CD4-positive, alpha-beta memory T cell (primary cell): ENCODE measurements at regions of chr12 and their contacts with region 1.

Region 1: DNA sequence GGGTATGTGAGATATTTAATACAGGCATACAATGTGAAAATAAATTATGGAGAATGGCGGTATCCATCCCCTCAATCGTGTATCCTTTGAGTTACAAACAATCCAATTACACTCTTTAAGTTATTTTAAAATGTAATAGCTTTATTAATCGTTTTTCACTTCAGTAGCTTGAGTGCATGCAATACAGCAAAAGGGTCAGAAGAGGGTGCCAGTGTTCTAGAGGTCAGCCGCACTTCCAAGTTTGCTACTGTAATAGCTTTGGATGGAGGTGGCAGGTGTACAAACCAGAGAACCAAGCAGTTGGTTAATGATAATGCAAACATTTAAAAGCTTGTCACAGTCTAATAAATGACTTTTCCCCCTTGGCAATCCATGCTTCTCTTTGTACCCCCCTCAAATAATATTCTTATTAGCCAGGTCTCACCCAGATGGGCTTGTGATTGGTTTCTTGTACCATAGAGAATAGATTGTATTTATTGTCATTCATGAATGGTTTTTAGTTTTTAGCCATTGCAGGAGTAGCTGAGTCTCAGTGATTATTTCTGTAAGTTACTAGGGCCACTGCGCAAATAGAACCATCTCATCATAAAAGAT is 127.0 kb downstream of the ERC1 start:
- DNase-seq: peak; percentile 66 to 72 (median 68)
- H3K4me3 ChIP-seq: no peak overlapping the region
- H3K4me3 Mint-ChIP-seq: no peak overlapping the region
- H3K27ac ChIP-seq: no peak overlapping the region
- H3K27ac Mint-ChIP-seq: no peak overlapping the region
- H3K4me1 ChIP-seq: peaks cover 8% of the 10 kb centered on the region
- H3K4me1 Mint-ChIP-seq: peaks cover 5 to 18% (median 10%) of the 10 kb centered on the region in 4 donors
- H3K27me3 ChIP-seq: no peaks in the 10 kb centered on the region
- H3K27me3 Mint-ChIP-seq: no peaks in the 10 kb centered on the region

Region 2: DNA sequence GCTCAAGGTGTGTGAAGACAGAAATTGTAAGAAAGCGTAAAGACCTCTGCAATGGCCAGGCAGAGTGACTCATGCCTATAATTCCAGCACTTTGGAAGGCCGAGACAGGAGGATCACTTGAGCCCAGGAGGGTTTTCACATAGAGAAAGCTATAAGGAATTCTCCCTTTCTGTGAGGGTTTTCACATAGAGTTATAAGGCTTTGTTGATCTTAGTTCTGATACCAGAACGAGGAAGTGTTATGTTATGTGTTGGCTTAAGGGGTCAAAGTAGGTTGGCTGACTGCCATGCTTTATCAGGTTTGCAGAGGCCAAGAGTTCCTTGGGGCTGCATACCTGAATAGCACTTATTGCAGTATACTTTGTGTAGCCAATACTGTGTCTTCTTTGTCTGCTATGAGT is 12.1 kb after region 1 on chr12:
- CTCF ChIA-PET with region 1: interaction called, 51 read pairs
- POLR2A ChIA-PET with region 1: interaction called, 3 read pairs
- intact Hi-C with region 1: no loop called
- DNase-seq: no peak
- H3K4me3 ChIP-seq: no peak overlapping the region
- H3K4me3 Mint-ChIP-seq: peak overlapping the region in 1 of 8 donors; percentile 7
- H3K27ac ChIP-seq: no peak overlapping the region
- H3K27ac Mint-ChIP-seq: peak overlapping the region in 2 of 7 donors; percentile 1 to 22
- H3K4me1 ChIP-seq: peaks cover 24% of the 10 kb centered on the region
- H3K4me1 Mint-ChIP-seq: peaks cover 26 to 50% (median 36%) of the 10 kb centered on the region in 4 donors
- H3K27me3 ChIP-seq: no peaks in the 10 kb centered on the region
- H3K27me3 Mint-ChIP-seq: no peaks in the 10 kb centered on the region

Region 3: GRCh38 chr12:1179128-1179527 is 61.1 kb after region 1 on chr12:
- CTCF ChIA-PET with region 1: interaction called, 14 read pairs
- POLR2A ChIA-PET with region 1: no interaction called
- intact Hi-C with region 1: no loop called
- DNase-seq: no peak
- H3K4me3 ChIP-seq: no peak overlapping the region
- H3K4me3 Mint-ChIP-seq: no peak overlapping the region
- H3K27ac ChIP-seq: no peak overlapping the region
- H3K27ac Mint-ChIP-seq: no peak overlapping the region
- H3K4me1 ChIP-seq: no peaks in the 10 kb centered on the region
- H3K4me1 Mint-ChIP-seq: peaks cover 2 to 4% (median 3%) of the 10 kb centered on the region in 4 donors
- H3K27me3 ChIP-seq: no peaks in the 10 kb centered on the region
- H3K27me3 Mint-ChIP-seq: no peaks in the 10 kb centered on the region

Region 4: GRCh38 chr12:1488908-1489381 is 370.9 kb after region 1 on chr12:
- CTCF ChIA-PET with region 1: interaction called, 10 read pairs
- POLR2A ChIA-PET with region 1: no interaction called
- intact Hi-C with region 1: no loop called
- DNase-seq: peak in 4 of 5 donors; percentile 24 to 34 (median 30)
- H3K4me3 ChIP-seq: no peak overlapping the region
- H3K4me3 Mint-ChIP-seq: peak overlapping the region; percentile 15 to 81 (median 52)
- H3K27ac ChIP-seq: no peak overlapping the region
- H3K27ac Mint-ChIP-seq: peak overlapping the region in 6 of 7 donors; percentile 71 to 93 (median 87)
- H3K4me1 ChIP-seq: peaks cover 14% of the 10 kb centered on the region
- H3K4me1 Mint-ChIP-seq: peaks cover 13 to 15% (median 15%) of the 10 kb centered on the region in 4 donors
- H3K27me3 ChIP-seq: no peaks in the 10 kb centered on the region
- H3K27me3 Mint-ChIP-seq: no peaks in the 10 kb centered on the region

Region 5: DNA sequence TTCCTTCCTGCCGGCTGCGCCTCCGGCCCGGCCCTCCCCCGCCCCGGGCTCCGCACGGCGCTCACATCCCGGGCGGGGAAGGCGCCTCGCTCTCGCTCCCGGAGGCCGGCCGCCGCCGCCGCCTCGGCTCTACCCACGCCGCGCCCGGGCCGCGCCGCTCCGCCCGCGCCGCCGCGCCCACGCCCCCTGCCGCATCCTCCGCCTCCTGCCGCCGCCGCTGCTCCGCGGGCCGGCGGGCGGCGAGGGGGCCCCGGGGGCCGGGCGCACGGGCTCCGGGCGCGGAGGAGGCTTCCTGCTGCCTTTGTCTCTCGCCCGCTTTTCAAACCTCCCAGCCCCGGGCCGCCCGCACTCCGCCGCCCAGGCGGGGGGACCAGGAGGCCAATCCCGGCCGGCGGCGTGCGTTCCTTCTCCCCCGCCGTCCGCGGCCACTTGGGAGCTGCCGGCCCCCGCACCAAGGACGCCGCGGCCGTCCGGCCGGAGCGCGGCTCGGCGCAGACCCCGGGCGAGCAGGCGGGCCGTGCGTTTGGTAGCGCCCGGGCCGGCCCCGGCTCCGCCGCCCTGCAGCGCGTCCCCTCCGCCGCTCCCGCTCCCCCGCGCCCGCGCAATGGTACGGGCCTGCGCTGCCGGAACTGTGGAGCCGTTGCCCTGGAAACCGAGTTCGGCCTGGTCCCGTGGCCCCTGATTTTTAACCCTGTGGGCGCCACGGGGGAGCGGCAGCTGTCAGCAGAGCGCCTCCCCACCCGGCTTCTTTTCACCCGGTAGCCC is 476.4 kb after region 1 on chr12 and contains the start of gene FBXL14:
- CTCF ChIA-PET with region 1: interaction called, 124 read pairs
- POLR2A ChIA-PET with region 1: interaction called, 15 read pairs
- intact Hi-C with region 1: no loop called
- DNase-seq: peak; percentile 91 to 93 (median 92)
- H3K4me3 ChIP-seq: peak within 1 kb of the TSS; percentile 77 to 95
- H3K4me3 Mint-ChIP-seq: peak within 1 kb of the TSS; percentile 92 to 96 (median 94)
- H3K27ac ChIP-seq: peak within 1 kb of the TSS; percentile 68
- H3K27ac Mint-ChIP-seq: peak within 1 kb of the TSS; percentile 92 to 99 (median 98)
- H3K4me1 ChIP-seq: peaks cover 42% of the 10 kb centered on the region
- H3K4me1 Mint-ChIP-seq: peaks cover 34 to 68% (median 42%) of the 10 kb centered on the region in 4 donors
- H3K27me3 ChIP-seq: no peaks in the 10 kb centered on the region
- H3K27me3 Mint-ChIP-seq: no peaks in the 10 kb centered on the region
- total RNA-seq, gene FBXL14: 41.6 to 43.4 TPM

Region 6: DNA sequence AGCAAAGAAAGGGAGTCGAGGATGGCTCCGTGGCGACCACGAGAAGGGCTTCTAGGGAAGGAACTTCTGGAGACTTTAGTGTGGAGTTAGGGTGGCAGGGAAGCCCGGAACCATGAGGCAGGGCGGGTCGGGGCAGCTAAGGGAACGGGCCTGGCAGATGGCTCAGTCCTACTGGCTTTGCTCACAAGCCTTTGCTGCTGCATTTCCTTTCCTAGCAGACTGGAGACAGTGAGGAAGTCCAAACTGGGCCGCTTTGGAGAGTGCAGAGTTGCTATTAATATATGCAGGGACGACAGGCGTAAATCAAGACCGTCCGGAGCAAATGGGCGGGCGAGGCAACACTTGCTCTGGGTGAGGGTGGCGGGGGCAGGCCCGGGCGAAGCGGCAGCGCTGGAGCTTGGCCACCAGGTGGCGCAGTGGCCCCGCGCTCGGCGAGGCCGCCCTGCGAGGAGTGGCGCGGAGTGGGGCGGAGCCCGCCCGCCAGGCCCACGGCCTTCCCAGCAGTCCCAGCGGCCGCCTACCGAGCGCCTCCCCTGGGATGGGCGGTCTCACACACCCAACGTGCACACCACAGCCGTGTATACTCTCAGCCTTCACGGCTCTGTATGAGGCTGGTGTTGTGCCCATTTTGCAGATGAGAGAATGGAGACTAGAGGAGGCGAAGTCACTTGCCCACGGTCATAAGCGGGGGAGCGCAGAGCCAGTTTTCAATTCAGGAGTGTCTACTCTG is 677.9 kb after region 1 on chr12:
- CTCF ChIA-PET with region 1: interaction called, 5 read pairs
- POLR2A ChIA-PET with region 1: no interaction called
- intact Hi-C with region 1: loop called (anchors 5 kb)
- DNase-seq: peak; percentile 93 to 95 (median 94)
- H3K4me3 ChIP-seq: peak overlapping the region; percentile 38 to 96
- H3K4me3 Mint-ChIP-seq: peak overlapping the region; percentile 91 to 96 (median 92)
- H3K27ac ChIP-seq: peak overlapping the region; percentile 82
- H3K27ac Mint-ChIP-seq: peak overlapping the region; percentile 89 to 98 (median 92)
- H3K4me1 ChIP-seq: peaks cover 15% of the 10 kb centered on the region
- H3K4me1 Mint-ChIP-seq: peaks cover 15 to 32% (median 22%) of the 10 kb centered on the region in 4 donors
- H3K27me3 ChIP-seq: no peaks in the 10 kb centered on the region
- H3K27me3 Mint-ChIP-seq: no peaks in the 10 kb centered on the region